CD4-positive, alpha-beta T cell (primary cell): ENCODE measurements at regions of chr6 and their contacts with region 1.

Region 1: GRCh38 chr6:42217519-42218367 is at the start of gene MRPS10:
- DNase-seq: peak; percentile 84 to 96 (median 86)
- ATAC-seq: peak; percentile 98
- H3K4me3 ChIP-seq: peak within 1 kb of the TSS; percentile 77
- H3K4me3 Mint-ChIP-seq: peak within 1 kb of the TSS; percentile 97
- H3K27ac ChIP-seq: peak within 1 kb of the TSS; percentile 60 to 65
- H3K27ac Mint-ChIP-seq: peak within 1 kb of the TSS; percentile 92
- H3K4me1 ChIP-seq: peaks cover 26% of the 10 kb centered on the region
- H3K4me1 Mint-ChIP-seq: peaks cover 23% of the 10 kb centered on the region
- H3K27me3 ChIP-seq: no peaks in the 10 kb centered on the region
- H3K27me3 Mint-ChIP-seq: no peaks in the 10 kb centered on the region
- CTCF ChIP-seq: no peak
- total RNA-seq, gene MRPS10: 17.1 to 18.4 TPM

Region 2: GRCh38 chr6:41779793-41780545 is 437.8 kb before region 1 on chr6 and contains the start of gene FRS3:
- CTCF ChIA-PET with region 1: no interaction called
- POLR2A ChIA-PET with region 1: interaction called, 3 read pairs
- intact Hi-C with region 1: loop called (anchors 1 kb)
- DNase-seq: peak; percentile 95 to 100 (median 99)
- ATAC-seq: peak; percentile 97
- H3K4me3 ChIP-seq: peak within 1 kb of the TSS; percentile 75
- H3K4me3 Mint-ChIP-seq: peak within 1 kb of the TSS; percentile 99
- H3K27ac ChIP-seq: no peak within 1 kb of the TSS
- H3K27ac Mint-ChIP-seq: peak within 1 kb of the TSS; percentile 68
- H3K4me1 ChIP-seq: peaks cover 24% of the 10 kb centered on the region
- H3K4me1 Mint-ChIP-seq: peaks cover 25% of the 10 kb centered on the region
- H3K27me3 ChIP-seq: peaks cover 7 to 8% of the 10 kb centered on the region in 2 experiments
- H3K27me3 Mint-ChIP-seq: peaks cover 11% of the 10 kb centered on the region
- CTCF ChIP-seq: peak; percentile 75
- total RNA-seq, gene FRS3: 4.6 to 5.4 TPM

Region 3: DNA sequence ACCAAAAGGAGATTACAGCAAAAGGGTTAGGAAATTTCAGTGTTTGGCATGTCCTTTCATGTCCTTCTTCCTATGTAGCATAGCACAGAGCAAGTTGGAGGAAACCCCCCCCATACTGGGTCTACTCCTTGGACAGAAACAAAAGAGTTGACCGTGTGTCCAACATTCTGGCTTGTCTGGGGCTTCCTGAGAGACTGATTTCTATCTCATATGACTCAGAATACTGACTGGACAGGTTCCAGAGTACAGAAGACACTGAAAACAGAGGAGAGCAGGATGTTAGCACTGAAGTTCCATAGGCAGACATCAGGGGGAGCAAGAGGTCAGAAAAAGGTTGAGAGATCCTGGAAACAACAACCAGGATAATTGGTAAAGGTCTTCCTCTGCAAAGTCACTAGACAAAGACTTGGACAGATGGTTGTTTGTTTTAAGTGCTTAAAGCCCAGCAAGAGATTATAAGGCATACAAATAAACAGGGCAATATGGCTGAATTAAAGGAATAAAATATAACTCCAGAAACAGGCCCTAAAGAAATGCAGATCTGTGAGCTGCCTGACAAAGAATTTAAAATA is 371.0 kb before region 1 on chr6:
- CTCF ChIA-PET with region 1: no interaction called
- POLR2A ChIA-PET with region 1: no interaction called
- intact Hi-C with region 1: loop called in 1 of 2 experiments (anchors 2 kb)
- DNase-seq: peak; percentile 18 to 77 (median 37)
- ATAC-seq: peak; percentile 78
- H3K4me3 ChIP-seq: no peak overlapping the region
- H3K4me3 Mint-ChIP-seq: no peak overlapping the region
- H3K27ac ChIP-seq: no peak overlapping the region
- H3K27ac Mint-ChIP-seq: no peak overlapping the region
- H3K4me1 ChIP-seq: no peaks in the 10 kb centered on the region
- H3K4me1 Mint-ChIP-seq: peaks cover 6% of the 10 kb centered on the region
- H3K27me3 ChIP-seq: no peaks in the 10 kb centered on the region
- H3K27me3 Mint-ChIP-seq: no peaks in the 10 kb centered on the region
- CTCF ChIP-seq: peak; percentile 91

Region 4: GRCh38 chr6:42050266-42051032 is 167.3 kb before region 1 on chr6 and contains the start of gene TAF8:
- CTCF ChIA-PET with region 1: interaction called, 5 read pairs
- POLR2A ChIA-PET with region 1: no interaction called
- intact Hi-C with region 1: loop called (anchors 2 to 10 kb)
- DNase-seq: peak; percentile 78 to 95 (median 84)
- ATAC-seq: peak; percentile 53
- H3K4me3 ChIP-seq: peak within 1 kb of the TSS; percentile 85
- H3K4me3 Mint-ChIP-seq: peak within 1 kb of the TSS; percentile 96
- H3K27ac ChIP-seq: peak within 1 kb of the TSS; percentile 85 to 89
- H3K27ac Mint-ChIP-seq: peak within 1 kb of the TSS; percentile 89
- H3K4me1 ChIP-seq: peaks cover 61% of the 10 kb centered on the region
- H3K4me1 Mint-ChIP-seq: peaks cover 72% of the 10 kb centered on the region
- H3K27me3 ChIP-seq: no peaks in the 10 kb centered on the region
- H3K27me3 Mint-ChIP-seq: no peaks in the 10 kb centered on the region
- CTCF ChIP-seq: no peak
- total RNA-seq, gene TAF8: 30.1 to 34.7 TPM

Region 5: DNA sequence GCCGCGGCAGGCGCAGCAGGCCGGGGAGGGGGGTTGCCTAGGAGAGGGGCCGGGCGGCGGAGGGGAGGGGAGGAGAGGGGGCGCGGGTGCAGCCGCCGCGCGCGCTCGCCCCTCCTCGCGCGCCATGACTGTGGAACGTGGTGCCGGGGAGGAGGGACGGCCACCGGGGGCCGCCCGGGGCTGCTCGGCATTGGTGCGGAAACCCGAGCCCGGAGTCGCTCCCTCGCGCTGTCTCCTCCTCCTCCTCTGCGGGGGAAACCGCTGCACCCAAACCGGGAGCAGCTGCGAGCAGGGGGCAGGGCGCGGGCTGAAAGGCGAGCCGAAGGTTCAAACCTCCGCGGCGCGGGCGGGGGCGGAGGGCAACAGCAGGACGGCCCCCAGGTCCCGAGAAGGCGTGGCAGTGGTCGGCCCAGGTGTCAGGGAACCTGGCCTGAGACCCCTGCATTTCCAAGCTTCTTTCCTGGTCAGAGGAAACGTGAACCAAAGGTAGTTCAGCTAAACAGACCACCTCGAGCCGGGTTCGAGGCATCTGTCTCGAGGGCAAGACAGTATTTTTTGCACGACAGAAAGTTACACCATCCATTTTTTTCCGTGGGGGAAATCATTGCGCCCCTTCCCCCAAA is 235.4 kb after region 1 on chr6:
- CTCF ChIA-PET with region 1: no interaction called
- POLR2A ChIA-PET with region 1: interaction called, 3 read pairs
- intact Hi-C with region 1: loop called in 1 of 2 experiments (anchors 5 kb)
- DNase-seq: peak; percentile 57 to 90 (median 75)
- ATAC-seq: peak; percentile 72
- H3K4me3 ChIP-seq: peak overlapping the region; percentile 96
- H3K4me3 Mint-ChIP-seq: peak overlapping the region; percentile 98
- H3K27ac ChIP-seq: peak overlapping the region in 1 of 2 donors; percentile 64
- H3K27ac Mint-ChIP-seq: peak overlapping the region; percentile 86
- H3K4me1 ChIP-seq: peaks cover 36% of the 10 kb centered on the region
- H3K4me1 Mint-ChIP-seq: peaks cover 51% of the 10 kb centered on the region
- H3K27me3 ChIP-seq: no peaks in the 10 kb centered on the region
- H3K27me3 Mint-ChIP-seq: no peaks in the 10 kb centered on the region
- CTCF ChIP-seq: no peak

Region 6: DNA sequence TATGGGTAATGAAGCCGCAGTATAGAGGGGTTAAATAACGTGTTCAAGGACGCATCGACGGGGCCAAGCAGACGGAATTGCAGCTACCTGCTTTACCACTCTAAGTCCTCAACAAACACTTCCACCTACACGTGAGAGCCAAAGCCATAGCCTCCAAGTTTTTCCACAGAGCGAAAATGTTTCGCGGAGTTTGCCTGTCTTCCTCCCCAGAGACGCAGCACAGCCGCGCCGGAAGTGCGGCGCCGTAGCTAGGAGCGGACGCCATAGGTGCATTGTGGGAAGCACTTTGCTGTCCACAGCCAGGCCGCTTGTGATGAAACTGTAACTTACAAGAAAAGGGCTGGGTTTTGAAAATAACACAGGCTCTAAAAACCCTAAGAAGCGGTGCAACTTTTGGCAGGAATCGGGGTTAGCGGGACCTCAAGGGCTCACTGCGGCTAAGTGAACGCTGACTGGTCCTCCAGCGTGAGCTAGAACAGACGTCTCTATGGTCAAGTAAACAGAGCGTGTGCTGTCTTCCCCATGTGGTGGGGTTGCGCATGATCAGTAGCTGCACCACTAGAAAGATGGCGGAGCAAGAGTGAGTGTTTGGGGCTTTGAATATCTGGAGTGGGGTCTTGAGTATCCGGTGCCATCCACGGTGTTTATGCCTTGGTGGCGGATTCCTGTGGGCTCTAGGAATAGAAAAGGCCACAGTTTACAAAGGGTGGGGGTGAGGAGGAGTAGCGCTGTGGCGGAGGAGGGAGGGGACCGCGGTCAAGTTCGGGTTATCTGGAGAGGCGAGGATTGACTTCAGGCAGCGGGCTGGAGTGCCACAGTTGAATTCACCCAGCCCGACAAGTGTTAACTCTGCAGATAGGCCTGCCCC is 661.9 kb after region 1 on chr6 and contains the start of gene RPL7L1:
- CTCF ChIA-PET with region 1: no interaction called
- POLR2A ChIA-PET with region 1: no interaction called
- intact Hi-C with region 1: loop called in 1 of 2 experiments (anchors 5 kb)
- DNase-seq: peak; percentile 68 to 93 (median 79)
- ATAC-seq: peak; percentile 92
- H3K4me3 ChIP-seq: peak within 1 kb of the TSS; percentile 69
- H3K4me3 Mint-ChIP-seq: peak within 1 kb of the TSS; percentile 93
- H3K27ac ChIP-seq: peak within 1 kb of the TSS; percentile 94 to 95
- H3K27ac Mint-ChIP-seq: peak within 1 kb of the TSS; percentile 97
- H3K4me1 ChIP-seq: peaks cover 41% of the 10 kb centered on the region
- H3K4me1 Mint-ChIP-seq: peaks cover 23% of the 10 kb centered on the region
- H3K27me3 ChIP-seq: no peaks in the 10 kb centered on the region
- H3K27me3 Mint-ChIP-seq: no peaks in the 10 kb centered on the region
- CTCF ChIP-seq: no peak
- total RNA-seq, gene RPL7L1: 76.1 TPM